Left ventricle myocardium inferior (tissue), 1 donor: ENCODE measurements at regions of chr5 and their contacts with region 1.

Region 1: DNA sequence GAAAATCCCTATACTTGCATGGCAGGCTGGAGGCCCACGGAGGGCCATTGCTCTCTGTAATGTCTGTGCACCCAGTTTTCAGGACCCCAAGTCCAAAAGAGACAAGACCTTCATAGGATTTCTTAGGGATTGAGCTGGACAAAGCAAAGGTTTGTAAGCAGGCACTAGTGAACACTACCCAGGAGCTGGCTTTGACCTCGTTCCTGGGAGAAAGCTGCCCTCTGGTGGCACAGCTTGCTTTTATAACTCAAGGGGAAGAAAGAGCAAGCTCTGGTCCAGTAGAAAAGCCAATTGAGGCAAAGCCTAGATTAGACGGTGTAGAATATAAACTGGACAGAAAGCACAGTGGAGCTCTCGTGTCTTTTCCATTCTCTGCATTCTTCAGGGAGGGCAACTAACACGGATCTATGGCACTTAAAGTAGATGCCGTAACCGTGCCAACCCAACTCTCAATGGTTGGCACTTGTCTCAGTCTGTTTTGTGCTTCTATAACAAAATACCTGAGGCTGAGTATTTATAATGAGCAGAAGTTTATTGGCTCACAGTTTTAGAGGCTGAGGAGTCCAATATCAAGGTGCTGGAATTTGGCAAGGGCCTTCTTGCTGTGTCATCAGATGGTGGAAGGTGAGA is 7.9 kb downstream of the GABRP start:
- DNase-seq: peak; percentile 54
- H3K4me3 ChIP-seq: no peak overlapping the region
- H3K27ac ChIP-seq: peak overlapping the region; percentile 52
- H3K4me1 ChIP-seq: peaks cover 53% of the 10 kb centered on the region
- H3K27me3 ChIP-seq: no peaks in the 10 kb centered on the region
- CTCF ChIP-seq: peak; percentile 77

Region 2: GRCh38 chr5:169583424-169584204 is 1207.8 kb before region 1 on chr5 and contains the start of gene SPDL1:
- intact Hi-C with region 1: no loop called
- DNase-seq: peak; percentile 95
- H3K4me3 ChIP-seq: peak within 1 kb of the TSS; percentile 93
- H3K27ac ChIP-seq: peak within 1 kb of the TSS; percentile 79
- H3K4me1 ChIP-seq: peaks cover 24% of the 10 kb centered on the region
- H3K27me3 ChIP-seq: no peaks in the 10 kb centered on the region
- CTCF ChIP-seq: no peak
- total RNA-seq, gene SPDL1: 4.3 TPM

Region 3: GRCh38 chr5:170648541-170648940 is 142.9 kb before region 1 on chr5:
- intact Hi-C with region 1: loop called (anchors 10 kb)
- DNase-seq: no peak
- H3K4me3 ChIP-seq: no peak overlapping the region
- H3K27ac ChIP-seq: no peak overlapping the region
- H3K4me1 ChIP-seq: peaks cover 3% of the 10 kb centered on the region
- H3K27me3 ChIP-seq: peaks cover 8% of the 10 kb centered on the region
- CTCF ChIP-seq: no peak

Region 4: GRCh38 chr5:170740551-170741205 is 50.8 kb before region 1 on chr5:
- intact Hi-C with region 1: loop called (anchors 5 kb)
- DNase-seq: no peak
- H3K4me3 ChIP-seq: no peak overlapping the region
- H3K27ac ChIP-seq: no peak overlapping the region
- H3K4me1 ChIP-seq: peaks cover 19% of the 10 kb centered on the region
- H3K27me3 ChIP-seq: no peaks in the 10 kb centered on the region
- CTCF ChIP-seq: no peak